ENCODE measurements at regions of chr17 and their contacts with region 1.

Region 1: GRCh38 chr17:28252436-28252835 is 66.6 kb upstream of the TMEM97 start:
- DNase-seq: no peak
- ATAC-seq: no peak
- H3K4me3 ChIP-seq: no peak overlapping the region
- H3K27ac ChIP-seq: no peak overlapping the region
- H3K4me1 ChIP-seq: peaks cover 0 to 12% (median 8%) of the 10 kb centered on the region in 12 donors
- H3K27me3 ChIP-seq: peaks cover 0 to 28% (median 12%) of the 10 kb centered on the region in 9 donors
- CTCF ChIP-seq: no peak
- POLR2A ChIP-seq: no peak

Region 2: GRCh38 chr17:27760069-27760885 is 492.2 kb before region 1 on chr17:
- intact Hi-C with region 1: loop called in 1 of 10 experiments (anchors 5 kb)
- DNase-seq: peak; percentile 46 to 81 (median 65)
- ATAC-seq: peak in 3 of 4 donors; percentile 52 to 57 (median 55)
- H3K4me3 ChIP-seq: no peak overlapping the region
- H3K27ac ChIP-seq: no peak overlapping the region
- H3K4me1 ChIP-seq: no peaks in the 10 kb centered on the region
- H3K27me3 ChIP-seq: no peaks in the 10 kb centered on the region
- CTCF ChIP-seq: peak; percentile 76 to 95 (median 90)
- POLR2A ChIP-seq: no peak

Region 3: GRCh38 chr17:27800522-27800921 is 451.9 kb before region 1 on chr17 and contains the start of gene NOS2:
- intact Hi-C with region 1: loop called in 7 of 10 experiments (anchors 1 to 10 kb)
- DNase-seq: no peak
- ATAC-seq: no peak
- H3K4me3 ChIP-seq: no peak within 1 kb of the TSS
- H3K27ac ChIP-seq: no peak within 1 kb of the TSS
- H3K4me1 ChIP-seq: peaks cover 0 to 3% (median 0%) of the 10 kb centered on the region in 12 donors
- H3K27me3 ChIP-seq: peaks cover 0 to 3% (median 0%) of the 10 kb centered on the region in 9 donors
- CTCF ChIP-seq: no peak
- POLR2A ChIP-seq: no peak
- total RNA-seq, gene NOS2: 0.07 to 2.2 (median 0.20) TPM

Region 4: DNA sequence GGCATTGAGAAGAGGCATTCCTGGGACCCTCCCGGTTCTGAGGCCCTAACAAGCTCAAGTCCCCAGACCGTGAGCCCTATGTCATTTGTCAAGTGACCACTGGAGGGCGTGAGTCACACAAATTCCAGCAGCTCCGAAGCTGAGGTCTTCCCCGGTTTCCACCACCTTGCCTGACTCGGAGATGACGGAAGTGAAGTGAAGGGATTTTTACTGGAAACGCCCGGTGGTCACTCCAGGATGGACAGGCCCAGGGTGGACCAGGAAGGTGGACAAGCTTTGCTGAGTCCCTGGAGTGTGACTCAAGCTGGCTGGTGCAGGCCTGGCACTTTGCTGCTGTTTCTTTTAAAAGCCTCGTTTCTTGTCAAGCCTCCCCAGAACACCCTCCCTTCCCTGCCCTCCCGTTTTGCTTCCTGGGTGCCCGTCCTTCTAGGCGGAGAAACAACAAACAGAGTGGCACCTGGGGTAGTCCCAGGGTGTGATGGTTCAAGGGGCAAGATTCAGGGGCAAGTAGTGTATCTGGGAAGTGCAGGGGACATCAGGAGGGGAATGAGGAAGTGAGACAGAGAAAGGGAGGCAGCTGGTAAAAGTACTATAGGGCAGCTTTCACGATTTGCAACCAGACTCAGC is 446.8 kb before region 1 on chr17:
- intact Hi-C with region 1: loop called in 7 of 10 experiments (anchors 1 to 10 kb)
- DNase-seq: peak; percentile 80 to 86 (median 82)
- ATAC-seq: peak; percentile 86 to 94 (median 91)
- H3K4me3 ChIP-seq: peak overlapping the region in 10 of 12 donors; percentile 16 to 51 (median 40)
- H3K27ac ChIP-seq: peak overlapping the region in 3 of 12 donors; percentile 41 to 53 (median 49)
- H3K4me1 ChIP-seq: peaks cover 0 to 31% (median 5%) of the 10 kb centered on the region in 12 donors
- H3K27me3 ChIP-seq: no peaks in the 10 kb centered on the region
- CTCF ChIP-seq: peak; percentile 70 to 89 (median 82)
- POLR2A ChIP-seq: no peak

Region 5: GRCh38 chr17:27892866-27893769 is 359.3 kb before region 1 on chr17 and contains the start of gene LYRM9:
- intact Hi-C with region 1: loop called in 6 of 10 experiments (anchors 2 to 10 kb)
- DNase-seq: peak; percentile 92 to 98 (median 93)
- ATAC-seq: peak; percentile 92 to 100 (median 100)
- H3K4me3 ChIP-seq: peak within 1 kb of the TSS; percentile 47 to 92 (median 76)
- H3K27ac ChIP-seq: peak within 1 kb of the TSS; percentile 14 to 93 (median 88)
- H3K4me1 ChIP-seq: peaks cover 0 to 27% (median 10%) of the 10 kb centered on the region in 12 donors
- H3K27me3 ChIP-seq: no peaks in the 10 kb centered on the region
- CTCF ChIP-seq: peak; percentile 80 to 99 (median 96)
- POLR2A ChIP-seq: peak in 1 of 2 donors; percentile 50
- total RNA-seq, gene LYRM9: 3.9 to 25.2 (median 9.7) TPM

Region 6: GRCh38 chr17:28180449-28180848 is 72.0 kb before region 1 on chr17:
- intact Hi-C with region 1: no loop called
- DNase-seq: no peak
- ATAC-seq: no peak
- H3K4me3 ChIP-seq: no peak overlapping the region
- H3K27ac ChIP-seq: no peak overlapping the region
- H3K4me1 ChIP-seq: peaks cover 0 to 6% (median 0%) of the 10 kb centered on the region in 12 donors
- H3K27me3 ChIP-seq: no peaks in the 10 kb centered on the region
- CTCF ChIP-seq: no peak
- POLR2A ChIP-seq: no peak

Measured in heart left ventricle (tissue), 16 donors.